Activated T-helper 1 cell treated with anti-CD3 and anti-CD28 coated beads, Interleukin-12 subunit alpha, Interleukin-12 subunit beta, Interleukin-2, Interleukin-4 antibody, amounts not matched to agents 30 ng/mL and 10 ng/mL and 1 ng/mL, durations not matched to agents 14 hours and 24 hours and 36 hours (primary cell): ENCODE measurements at regions of chr1 and their contacts with region 1.

Region 1: DNA sequence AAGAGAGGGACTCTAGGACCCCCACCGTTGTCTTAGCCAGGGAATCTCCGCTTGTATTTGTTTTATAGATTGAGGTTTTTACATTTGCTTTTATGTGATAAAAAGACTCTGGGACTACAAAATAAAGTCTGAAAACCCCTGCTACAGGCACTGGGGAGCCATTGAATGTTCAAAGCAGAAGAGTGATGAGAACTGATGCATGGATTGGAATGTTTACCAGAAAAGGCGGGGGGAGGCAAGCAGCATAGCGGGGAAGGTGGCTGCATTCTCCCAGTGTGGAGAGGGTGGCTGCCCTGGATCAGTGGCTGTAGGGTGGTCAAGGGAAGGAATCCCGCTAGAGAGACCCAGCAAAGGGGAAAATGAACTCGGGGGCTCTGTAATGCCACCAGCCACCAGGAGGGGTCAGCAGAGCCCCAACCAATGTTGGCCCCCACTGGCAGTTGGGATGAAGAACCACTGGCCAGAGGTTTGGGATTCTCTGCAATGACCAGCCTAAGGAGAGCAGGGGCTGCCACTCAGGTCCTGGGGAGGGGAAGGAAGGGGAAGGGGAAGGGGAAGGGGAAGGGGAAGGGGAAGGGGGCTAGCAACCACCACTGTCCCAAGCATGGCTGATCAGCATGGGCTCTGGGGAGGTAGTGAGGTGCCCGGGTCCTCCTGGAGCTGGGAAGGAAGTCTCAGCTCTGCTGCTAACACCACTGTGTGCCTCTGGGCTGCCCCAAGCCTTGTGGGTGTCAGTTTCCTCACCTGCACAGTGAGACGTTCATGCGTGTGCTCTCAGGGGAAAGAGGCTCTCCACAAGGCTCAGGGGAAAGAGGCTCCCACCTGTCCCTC is 19.2 kb upstream of the PEF1 start:
- DNase-seq: peak; percentile 27
- H3K4me3 Mint-ChIP-seq: no peak overlapping the region
- H3K27ac Mint-ChIP-seq: no peak overlapping the region
- H3K4me1 Mint-ChIP-seq: no peaks in the 10 kb centered on the region
- H3K27me3 Mint-ChIP-seq: peaks cover 10% of the 10 kb centered on the region

Region 2: DNA sequence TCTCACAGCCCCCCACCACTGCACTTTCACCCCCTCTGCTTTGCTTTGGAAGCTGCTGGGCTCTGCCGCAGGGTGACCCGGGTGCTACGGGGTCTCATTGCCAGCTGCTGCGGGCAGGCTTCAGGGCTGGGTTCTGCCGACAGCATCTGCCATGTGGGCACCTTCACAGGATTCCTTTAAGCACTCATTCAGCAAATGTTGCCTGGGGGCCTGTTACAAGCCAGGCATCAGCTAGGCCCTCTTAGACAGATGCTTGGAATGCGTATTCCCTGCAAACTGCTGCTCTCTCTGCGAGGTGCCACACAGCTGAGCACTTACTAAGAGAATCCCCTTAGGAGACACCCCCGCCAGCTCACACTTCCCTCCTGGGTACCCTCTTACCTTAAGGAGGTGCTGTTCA is 10.8 kb after region 1 on chr1:
- intact Hi-C with region 1: no loop called
- DNase-seq: no peak
- H3K4me3 Mint-ChIP-seq: no peak overlapping the region
- H3K27ac Mint-ChIP-seq: no peak overlapping the region
- H3K4me1 Mint-ChIP-seq: peaks cover 6% of the 10 kb centered on the region
- H3K27me3 Mint-ChIP-seq: peaks cover 23% of the 10 kb centered on the region

Region 3: GRCh38 chr1:31705080-31705866 is 41.4 kb after region 1 on chr1:
- intact Hi-C with region 1: loop called (anchors 2 kb)
- DNase-seq: peak; percentile 76
- H3K4me3 Mint-ChIP-seq: peak overlapping the region; percentile 66
- H3K27ac Mint-ChIP-seq: peak overlapping the region; percentile 64
- H3K4me1 Mint-ChIP-seq: peaks cover 54% of the 10 kb centered on the region
- H3K27me3 Mint-ChIP-seq: peaks cover 37% of the 10 kb centered on the region

Region 4: DNA sequence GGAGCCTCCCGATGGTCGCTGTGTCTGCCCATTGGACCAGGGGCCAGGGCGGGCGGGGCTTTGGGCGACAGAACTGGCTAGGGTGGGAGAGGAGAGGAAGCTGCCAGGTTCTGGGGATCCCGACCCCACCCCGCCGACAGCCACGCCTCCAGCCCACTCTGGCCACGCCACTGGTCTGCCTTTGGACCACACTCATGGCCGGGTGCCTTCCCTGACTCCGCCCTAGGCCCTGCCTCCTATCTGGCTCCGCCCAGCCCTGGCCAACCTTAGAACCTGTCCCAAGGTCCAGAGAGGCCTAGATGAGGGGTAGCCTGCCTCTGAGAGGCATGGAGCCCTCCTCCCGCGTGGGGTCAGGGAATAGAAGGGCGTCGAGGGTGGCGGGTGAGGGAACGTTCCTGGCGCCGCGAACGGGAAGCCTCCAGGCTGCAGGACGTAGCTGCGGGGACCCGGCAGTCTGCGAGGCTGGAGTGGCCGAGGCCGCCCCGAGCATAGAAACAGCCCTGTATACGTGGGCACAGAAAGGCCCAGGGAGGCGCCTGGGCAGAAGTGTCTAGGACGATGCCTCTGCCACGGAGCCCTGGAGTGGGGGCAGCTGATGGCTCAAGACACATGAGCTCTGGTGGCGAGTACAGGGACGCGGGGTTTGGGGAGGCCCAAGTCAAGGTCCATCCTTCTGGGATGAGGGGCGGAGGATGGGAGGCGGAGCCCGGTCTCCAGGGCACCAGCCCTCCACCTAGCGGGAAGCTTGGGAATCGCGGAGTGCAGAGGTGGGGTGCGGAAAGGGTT is 51.4 kb after region 1 on chr1:
- intact Hi-C with region 1: loop called (anchors 2 kb)
- DNase-seq: no peak
- H3K4me3 Mint-ChIP-seq: no peak overlapping the region
- H3K27ac Mint-ChIP-seq: no peak overlapping the region
- H3K4me1 Mint-ChIP-seq: no peaks in the 10 kb centered on the region
- H3K27me3 Mint-ChIP-seq: peaks cover 60% of the 10 kb centered on the region

Region 5: DNA sequence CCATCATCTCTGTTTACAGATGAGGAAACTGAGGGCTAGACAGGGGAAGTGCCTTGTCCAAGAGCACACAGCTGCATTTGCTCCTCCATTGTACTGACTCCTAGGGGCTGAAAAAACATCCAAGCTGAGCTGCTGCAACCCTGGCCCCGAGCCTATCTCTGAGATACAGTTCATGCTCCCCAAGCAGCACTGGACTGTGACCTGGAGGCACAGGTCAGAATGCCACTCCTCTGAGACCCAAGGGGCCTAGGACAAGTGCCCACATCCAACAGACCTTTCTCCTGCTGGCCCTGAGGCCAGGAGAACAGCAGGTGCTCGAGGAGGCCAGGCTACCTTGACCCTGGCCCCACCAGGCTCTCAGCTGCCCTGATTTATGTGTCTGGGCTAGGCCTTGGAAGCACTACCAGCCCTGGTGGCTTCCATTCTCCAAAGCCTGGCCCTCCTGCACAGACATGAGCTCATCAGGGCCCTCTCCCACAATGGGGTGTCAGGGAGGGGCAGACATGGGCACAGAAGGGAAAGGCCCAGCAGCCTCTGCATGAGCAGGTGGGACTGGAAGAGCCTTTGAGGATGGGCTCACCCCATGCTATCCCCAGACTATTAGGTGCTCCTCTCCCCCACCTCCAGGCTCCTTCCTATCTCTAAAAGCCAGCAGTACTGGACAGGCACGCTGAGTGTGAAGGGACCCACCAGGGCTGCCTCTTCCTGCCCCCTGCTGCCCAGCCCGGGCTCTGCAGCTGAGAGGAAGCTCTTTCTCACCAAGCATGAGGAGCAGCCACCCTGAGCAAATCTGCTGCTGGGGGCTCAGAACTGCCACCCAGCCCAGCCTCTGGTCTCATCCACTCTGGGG is 81.5 kb after region 1 on chr1:
- intact Hi-C with region 1: loop called (anchors 1 kb)
- DNase-seq: peak; percentile 40
- H3K4me3 Mint-ChIP-seq: no peak overlapping the region
- H3K27ac Mint-ChIP-seq: no peak overlapping the region
- H3K4me1 Mint-ChIP-seq: peaks cover 9% of the 10 kb centered on the region
- H3K27me3 Mint-ChIP-seq: peaks cover 11% of the 10 kb centered on the region

Region 6: GRCh38 chr1:33219881-33220661 is 1556.2 kb after region 1 on chr1:
- intact Hi-C with region 1: no loop called
- DNase-seq: no peak
- H3K4me3 Mint-ChIP-seq: no peak overlapping the region
- H3K27ac Mint-ChIP-seq: no peak overlapping the region
- H3K4me1 Mint-ChIP-seq: no peaks in the 10 kb centered on the region
- H3K27me3 Mint-ChIP-seq: peaks cover 17% of the 10 kb centered on the region